Right ventricle myocardium inferior (tissue), 1 donor: ENCODE measurements at regions of chr18 and their contacts with region 1.

Region 1: DNA sequence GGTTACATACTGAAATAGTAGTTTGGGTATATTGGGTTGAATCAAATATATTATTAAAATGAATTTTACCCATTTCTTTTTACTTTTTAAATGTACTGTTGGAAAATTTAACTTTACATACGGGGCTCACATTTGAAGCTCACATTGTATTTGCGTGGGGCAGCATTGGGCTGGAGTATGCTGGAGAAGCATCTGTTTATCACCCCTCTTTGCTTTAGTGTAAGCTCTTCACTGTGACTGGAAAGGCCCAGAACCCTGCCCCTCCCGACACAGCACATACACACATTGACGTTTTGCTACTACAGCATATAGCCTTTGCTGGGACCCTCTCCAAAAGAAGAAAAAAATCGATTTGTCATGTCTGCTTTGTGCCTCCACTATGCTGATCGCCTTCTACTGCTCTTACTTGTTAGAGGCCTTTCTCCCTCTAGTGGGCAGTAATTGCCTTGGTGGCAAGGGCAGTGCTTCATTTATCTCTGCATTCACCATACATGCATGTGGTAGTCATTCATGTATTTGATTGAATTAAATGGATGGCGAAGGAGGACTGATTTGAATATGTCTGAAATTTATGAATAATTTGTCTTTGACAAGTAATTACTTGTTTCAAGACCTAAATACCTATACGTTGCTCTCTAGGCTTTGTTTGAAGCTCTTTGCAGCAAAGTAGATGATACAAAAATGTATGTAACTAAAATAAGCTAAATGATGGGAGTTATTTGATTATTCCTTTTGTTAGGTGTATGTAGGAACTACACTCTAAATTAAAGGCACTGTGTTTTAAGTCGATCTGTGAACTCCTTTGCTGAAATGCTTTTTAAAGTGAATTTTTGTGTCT is 37.4 kb downstream of the VAPA start:
- DNase-seq: no peak
- ATAC-seq: peak; percentile 72

Region 2: DNA sequence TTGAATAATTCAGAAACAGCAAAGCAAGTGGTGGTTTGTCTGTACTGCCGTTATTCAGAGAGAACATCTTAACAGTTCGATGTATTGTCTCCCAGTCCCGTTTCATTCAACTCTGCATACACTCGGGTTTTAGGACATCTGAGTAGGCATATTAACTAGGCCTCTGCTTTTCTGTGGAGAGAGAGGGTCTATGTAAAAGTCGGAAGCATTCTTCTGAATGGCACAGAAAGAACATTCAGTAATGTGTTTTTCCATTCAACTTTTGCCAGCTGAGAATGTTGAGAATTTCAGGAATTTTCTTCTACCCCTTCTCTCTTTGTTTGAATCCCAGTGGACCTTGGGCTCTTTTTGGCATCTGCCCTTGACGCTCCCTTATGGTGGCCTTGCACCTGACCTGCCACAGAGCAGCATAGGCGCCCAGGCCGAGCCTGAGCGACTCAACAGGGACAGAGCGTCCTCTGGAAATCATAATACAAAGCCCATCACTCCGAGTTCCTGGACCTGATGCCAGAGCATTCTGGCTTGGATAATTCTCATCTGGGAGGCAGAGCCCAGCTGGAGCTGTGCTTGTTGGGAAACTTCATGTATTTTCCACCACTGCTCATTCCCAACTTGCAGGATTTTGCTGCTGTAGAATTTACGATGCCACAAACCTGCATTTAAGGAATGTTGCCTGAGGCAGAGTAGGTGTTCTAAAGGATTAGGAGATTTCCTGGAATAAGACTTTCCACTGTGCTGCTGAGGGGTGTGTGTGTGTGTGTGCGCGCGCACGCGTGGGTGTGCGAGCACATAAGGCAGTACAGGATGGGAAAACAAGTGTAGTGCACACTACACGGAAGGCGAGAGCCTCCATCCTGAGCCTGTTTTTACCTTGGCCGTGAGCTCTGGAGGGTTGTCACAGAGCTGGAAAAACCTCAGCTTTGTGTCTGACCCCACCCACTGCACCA is 142.7 kb before region 1 on chr18:
- intact Hi-C with region 1: loop called (anchors 5 kb)
- DNase-seq: no peak
- ATAC-seq: peak; percentile 77

Region 3: DNA sequence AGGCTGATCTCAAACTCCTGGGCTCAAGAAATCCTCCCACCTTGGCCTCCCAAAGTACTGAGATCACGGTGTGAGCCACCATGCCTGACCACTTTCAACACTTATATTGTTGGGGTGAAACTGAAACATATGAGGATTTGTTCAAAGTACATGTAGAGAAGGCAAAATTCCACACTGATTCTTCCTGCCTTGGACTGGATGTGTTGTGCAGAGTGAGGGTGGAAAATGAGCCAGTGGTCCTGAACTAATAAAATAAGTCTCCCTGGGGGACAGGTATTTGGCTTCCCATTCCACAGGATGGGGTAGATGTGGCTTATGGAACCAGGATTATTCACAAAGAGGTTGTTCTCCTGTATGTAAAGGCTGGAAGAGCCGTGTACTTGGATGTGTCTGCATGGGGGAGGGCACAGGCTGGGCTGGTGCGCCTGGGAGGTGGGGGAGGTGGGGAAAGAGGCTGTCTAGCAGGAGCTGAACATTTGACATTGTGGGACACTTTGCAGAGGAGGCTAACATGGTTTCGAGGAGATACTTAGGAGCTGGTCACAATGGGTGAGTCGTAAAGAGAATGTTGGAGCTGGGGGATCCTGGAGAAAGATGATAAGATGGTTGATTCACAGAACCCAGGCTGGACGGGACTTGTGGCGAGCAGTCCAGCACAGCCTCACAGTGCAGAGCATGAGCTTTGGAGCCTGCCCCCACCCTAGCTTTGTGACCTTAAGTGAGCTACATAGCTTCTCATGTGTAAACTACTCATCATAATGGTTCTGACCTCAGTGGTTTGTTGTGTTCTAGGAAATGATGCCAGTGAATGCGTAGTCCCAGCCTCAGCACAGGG is 65.9 kb before region 1 on chr18 and contains the start of gene TXNDC2:
- intact Hi-C with region 1: no loop called
- DNase-seq: no peak
- ATAC-seq: no peak
- total RNA-seq, gene TXNDC2: not detected